GM12878 (cell line): ENCODE measurements at regions of chr13 and their contacts with region 1.

Region 1: GRCh38 chr13:91506759-91507158 is 108.3 kb downstream of the GPC5 start:
- DNase-seq: no peak
- ATAC-seq: no peak
- H3K4me3 ChIP-seq: no peak overlapping the region
- H3K27ac ChIP-seq: no peak overlapping the region
- H3K4me1 ChIP-seq: no peaks in the 10 kb centered on the region
- H3K27me3 ChIP-seq: no peaks in the 10 kb centered on the region
- CTCF ChIP-seq: no peak
- EP300 ChIP-seq: no peak
- POLR2A ChIP-seq: no peak
- RAD21 ChIP-seq: no peak

Region 2: GRCh38 chr13:91609353-91609752 is 102.6 kb after region 1 on chr13:
- CTCF ChIA-PET with region 1: no interaction called
- POLR2A ChIA-PET with region 1: no interaction called
- RAD21 ChIA-PET with region 1: no interaction called
- SMC1A ChIA-PET with region 1: no interaction called
- in situ Hi-C with region 1: no loop called
- intact Hi-C with region 1: no loop called
- DNase-seq: no peak
- ATAC-seq: no peak
- H3K4me3 ChIP-seq: no peak overlapping the region
- H3K27ac ChIP-seq: no peak overlapping the region
- H3K4me1 ChIP-seq: no peaks in the 10 kb centered on the region
- H3K27me3 ChIP-seq: no peaks in the 10 kb centered on the region
- CTCF ChIP-seq: no peak
- EP300 ChIP-seq: no peak
- POLR2A ChIP-seq: no peak
- RAD21 ChIP-seq: no peak

Region 3: DNA sequence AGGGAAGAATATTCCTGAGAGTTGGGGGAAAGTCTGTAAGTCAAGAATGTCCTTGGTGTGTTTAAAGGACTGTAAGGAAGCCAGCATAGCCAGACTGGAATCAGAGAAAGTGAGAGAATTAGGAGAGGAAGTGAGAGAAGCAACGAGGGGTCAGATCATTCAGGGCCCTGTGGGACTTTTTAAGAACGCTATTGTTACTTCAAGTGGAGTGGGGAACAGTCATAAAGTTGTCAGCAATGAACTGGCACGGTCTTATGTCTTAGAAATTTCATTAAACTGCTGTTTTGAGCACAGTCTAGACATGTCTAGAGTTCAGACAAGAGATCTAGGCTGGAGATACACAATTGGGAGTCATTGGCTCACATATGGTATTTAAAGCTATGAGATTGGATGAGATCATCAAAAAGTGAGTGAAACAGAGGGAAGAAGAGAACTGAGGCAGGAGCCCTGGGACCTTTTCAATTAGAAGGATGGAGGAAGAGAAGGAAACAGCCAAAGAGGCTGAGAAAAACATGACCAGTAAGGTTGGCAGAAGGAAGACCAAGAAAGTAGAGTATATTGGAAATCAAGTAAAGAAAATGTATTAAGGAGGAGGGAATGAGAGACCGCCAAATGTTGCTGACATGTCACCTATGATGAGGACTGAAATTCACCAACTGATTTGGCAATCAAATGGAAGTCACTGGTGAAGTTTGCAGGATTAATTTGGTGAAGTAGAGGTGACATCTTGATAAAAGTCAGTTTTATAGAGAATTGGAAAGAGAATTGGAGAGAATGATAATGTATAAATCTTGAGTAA is 155.1 kb after region 1 on chr13:
- CTCF ChIA-PET with region 1: no interaction called
- POLR2A ChIA-PET with region 1: no interaction called
- RAD21 ChIA-PET with region 1: no interaction called
- SMC1A ChIA-PET with region 1: no interaction called
- in situ Hi-C with region 1: no loop called
- intact Hi-C with region 1: loop called (anchors 5 kb)
- DNase-seq: peak; percentile 15
- ATAC-seq: peak; percentile 65
- H3K4me3 ChIP-seq: no peak overlapping the region
- H3K27ac ChIP-seq: no peak overlapping the region
- H3K4me1 ChIP-seq: no peaks in the 10 kb centered on the region
- H3K27me3 ChIP-seq: no peaks in the 10 kb centered on the region
- CTCF ChIP-seq: no peak
- EP300 ChIP-seq: no peak
- POLR2A ChIP-seq: no peak
- RAD21 ChIP-seq: no peak